Sciatic nerve (tissue), 2 donors: ENCODE measurements at regions of chr1 and their contacts with region 1.

Region 1: DNA sequence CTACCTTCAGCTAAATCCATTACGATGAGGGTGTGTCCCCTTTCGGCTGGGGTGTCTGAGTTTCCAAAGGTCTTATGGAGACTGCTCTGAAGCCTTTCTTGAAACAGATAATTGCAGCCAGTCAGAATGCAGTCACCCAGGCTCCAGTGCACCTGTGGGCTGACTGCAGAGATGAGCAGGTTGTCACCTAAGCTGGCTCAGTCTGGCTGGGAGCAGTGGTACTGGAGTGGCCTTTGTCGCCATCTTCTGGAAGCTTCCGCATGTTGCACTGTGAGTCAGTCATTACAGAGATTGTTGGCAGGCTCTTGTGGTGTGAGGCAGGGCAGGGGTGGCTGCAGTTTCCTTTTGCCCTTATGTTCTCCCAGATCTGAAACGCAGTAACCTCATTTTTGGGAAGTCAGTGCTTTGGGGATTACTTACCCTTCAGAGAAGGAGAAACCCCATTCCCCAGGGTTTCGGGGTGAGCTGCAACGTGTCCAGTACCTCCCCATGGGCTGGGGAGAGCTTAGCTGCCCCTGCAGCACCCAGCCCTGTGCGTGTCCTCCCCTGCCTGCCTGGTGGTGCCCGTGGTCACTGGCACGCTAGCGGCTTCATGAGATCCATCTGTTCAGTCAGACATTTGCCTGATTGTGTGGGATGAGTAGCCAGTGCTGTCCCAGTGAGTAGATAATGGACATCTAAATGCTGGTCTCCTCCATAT is 48.0 kb downstream of the SMYD2 start:
- DNase-seq: peak; percentile 87
- ATAC-seq: peak; percentile 92

Region 2: DNA sequence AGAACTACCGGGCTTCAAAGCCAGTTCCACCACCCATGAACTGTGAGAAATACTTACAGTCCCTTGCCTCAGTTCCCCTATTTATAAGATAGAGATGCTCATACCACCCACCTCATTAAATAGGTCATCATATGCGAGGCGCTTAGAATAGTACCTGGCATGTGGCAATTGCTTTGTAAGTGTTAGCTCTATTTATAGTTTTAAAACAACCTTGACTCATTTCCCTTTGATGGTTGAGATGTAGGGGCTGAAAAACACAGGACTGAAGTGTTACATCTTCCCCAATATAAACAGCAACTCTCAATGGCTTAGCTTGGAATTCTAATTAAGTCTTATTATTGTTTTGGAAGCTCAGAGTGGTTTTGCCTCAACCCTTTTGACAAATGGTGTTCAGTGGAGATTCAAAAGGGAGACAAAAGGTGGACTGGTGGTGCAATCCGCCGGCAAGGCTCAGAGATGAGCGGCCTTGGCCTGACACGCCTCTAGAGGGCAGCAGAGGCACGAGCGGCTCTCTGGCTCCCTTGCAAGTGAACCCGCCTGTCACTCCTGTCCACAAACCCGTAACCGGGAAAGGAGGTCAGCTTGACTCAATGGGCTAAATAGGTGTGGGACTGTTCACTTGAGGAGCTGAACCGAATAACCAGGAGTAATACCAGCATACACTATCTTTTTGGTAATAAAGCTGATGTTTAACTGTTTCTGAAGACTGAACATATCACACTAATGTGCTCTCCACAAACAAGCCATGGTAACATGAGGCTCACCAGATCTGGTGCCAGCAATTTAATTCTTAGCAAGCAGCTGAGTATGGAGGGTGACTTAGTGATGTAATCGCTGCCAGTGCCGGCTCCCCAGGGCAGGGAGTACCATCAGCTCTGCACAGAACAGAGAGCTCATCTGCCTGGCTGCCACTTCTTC is 67.5 kb before region 1 on chr1:
- intact Hi-C with region 1: loop called (anchors 5 kb)
- DNase-seq: peak; percentile 91
- ATAC-seq: peak; percentile 95

Region 3: GRCh38 chr1:214584805-214585766 is 256.2 kb after region 1 on chr1:
- intact Hi-C with region 1: loop called (anchors 10 kb)
- DNase-seq: no peak
- ATAC-seq: peak; percentile 81

Region 4: DNA sequence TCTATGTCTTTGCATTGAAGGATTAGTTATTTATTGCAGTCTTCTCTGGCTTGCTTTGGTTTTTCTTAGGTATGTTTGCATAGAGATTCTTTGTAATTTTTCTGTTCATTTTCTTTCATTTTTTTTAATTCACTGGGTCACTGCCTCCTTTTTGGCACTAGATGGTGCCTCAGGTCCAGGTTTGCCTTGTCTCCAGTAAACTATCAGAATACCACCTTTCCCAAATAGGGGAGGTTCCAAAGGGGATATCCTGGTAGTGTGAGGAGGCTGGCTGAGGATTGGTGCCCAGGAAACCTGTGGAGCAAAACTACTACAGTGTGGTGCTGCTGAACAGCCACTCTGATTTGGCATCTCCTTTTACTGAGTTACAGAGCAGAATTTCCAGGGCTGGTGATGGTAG is 1495.3 kb after region 1 on chr1:
- intact Hi-C with region 1: no loop called
- DNase-seq: no peak
- ATAC-seq: no peak